Activated CD4-positive, alpha-beta memory T cell treated with anti-CD3 and anti-CD28 coated beads, Interleukin-2, amount 10 ng/mL, durations not matched to agents 7 days and 5 days (primary cell): ENCODE measurements at regions of chr5 and their contacts with region 1.

Region 1: DNA sequence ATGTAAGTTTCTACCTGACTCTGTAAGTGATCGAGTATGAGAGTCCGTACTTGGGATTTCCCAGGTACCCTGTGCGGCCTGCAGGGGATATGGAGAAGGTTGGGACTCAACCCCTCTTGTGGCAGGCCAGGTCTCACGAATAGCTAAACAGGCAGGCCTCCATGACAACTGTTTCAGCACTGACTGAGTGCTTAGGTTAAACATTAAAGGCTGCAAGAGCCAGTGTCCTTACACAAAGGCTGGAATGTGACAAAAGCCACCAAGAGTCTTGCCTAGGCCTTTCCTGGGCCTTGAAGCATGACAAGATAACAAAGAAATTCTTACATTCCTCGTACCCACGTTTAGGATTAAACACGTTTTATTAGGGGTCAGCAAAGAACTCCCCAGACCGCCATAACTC is 58.6 kb downstream of the THBS4 start:
- DNase-seq: no peak
- H3K4me3 Mint-ChIP-seq: no peak overlapping the region
- H3K27ac Mint-ChIP-seq: no peak overlapping the region
- H3K4me1 Mint-ChIP-seq: peaks cover 15% of the 10 kb centered on the region
- H3K27me3 Mint-ChIP-seq: no peaks in the 10 kb centered on the region

Region 2: DNA sequence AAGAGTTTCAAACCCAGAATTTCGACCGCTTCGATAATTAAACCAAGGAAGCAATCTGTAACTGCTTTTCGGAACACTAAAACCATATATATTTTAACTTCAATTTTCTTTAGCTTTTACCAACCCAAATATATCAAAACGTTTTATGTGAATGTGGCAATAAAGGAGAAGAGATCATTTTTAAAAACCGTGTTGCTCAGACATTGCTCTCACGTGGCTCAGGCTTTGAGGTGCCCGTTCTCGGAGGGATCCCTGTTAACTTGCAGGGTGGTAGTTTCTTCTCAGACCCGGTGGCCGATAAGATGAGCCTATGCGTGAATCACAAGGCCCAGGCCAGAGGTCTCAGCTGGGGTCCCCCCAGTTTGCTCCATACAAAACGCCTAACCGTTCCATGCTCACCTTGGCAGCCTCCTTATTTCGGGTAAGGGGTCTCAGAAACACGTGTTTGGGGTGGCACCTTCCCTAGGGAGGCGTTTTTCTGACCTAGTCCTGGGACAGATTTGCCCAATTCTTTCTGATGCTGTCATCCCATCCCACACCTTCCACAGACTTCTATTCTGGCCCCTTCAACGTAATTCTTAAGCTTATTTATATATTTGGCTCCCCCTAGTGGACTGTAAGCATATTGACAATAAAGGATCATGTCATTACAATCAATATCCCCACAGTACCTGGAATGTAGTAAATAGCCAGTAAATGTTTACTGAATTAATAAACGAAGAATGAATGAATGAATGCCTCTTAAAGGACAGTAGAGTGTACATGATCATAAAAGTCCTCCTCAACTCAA is 10.5 kb before region 1 on chr5:
- CTCF ChIA-PET with region 1: interaction called, 17 read pairs
- POLR2A ChIA-PET with region 1: no interaction called
- DNase-seq: peak; percentile 31
- H3K4me3 Mint-ChIP-seq: peak overlapping the region; percentile 56
- H3K27ac Mint-ChIP-seq: peak overlapping the region; percentile 64
- H3K4me1 Mint-ChIP-seq: peaks cover 16% of the 10 kb centered on the region
- H3K27me3 Mint-ChIP-seq: no peaks in the 10 kb centered on the region

Region 3: GRCh38 chr5:80134879-80135278 is 41.1 kb after region 1 on chr5:
- CTCF ChIA-PET with region 1: interaction called, 12 read pairs
- POLR2A ChIA-PET with region 1: interaction called, 10 read pairs
- DNase-seq: no peak
- H3K4me3 Mint-ChIP-seq: no peak overlapping the region
- H3K27ac Mint-ChIP-seq: peak overlapping the region; percentile 95
- H3K4me1 Mint-ChIP-seq: peaks cover 62% of the 10 kb centered on the region
- H3K27me3 Mint-ChIP-seq: no peaks in the 10 kb centered on the region

Region 4: DNA sequence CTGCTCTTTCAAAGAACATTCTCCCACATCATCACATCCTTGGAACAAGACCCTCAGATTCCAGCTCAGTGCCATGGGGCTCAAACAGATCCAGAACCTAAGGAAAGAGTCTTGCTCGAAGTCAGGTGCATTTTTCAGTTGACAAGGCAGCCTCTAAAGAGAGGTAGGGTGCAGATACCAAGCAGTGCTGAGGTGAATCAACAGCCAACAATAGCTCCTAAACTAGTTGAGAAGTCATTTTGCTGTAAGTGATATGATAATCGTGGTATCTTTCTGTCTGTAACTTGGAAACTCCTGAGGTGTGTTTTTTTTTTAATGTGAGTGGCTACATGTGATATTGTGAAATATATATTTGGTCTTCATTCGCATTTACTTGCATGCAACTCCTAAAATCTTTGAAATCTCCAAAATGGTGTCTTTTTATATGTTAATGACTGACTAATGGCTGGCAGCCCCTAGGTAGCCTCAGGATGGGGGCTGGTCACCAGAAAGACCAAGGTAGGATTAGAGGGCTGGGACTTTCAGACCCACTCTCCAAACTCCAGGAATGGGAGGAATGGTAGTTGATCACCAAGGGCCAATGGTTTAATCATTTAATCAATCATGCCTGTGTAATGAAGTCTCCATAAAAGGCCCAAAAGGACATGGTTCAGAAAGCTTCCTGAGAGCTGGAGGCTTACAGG is 65.5 kb after region 1 on chr5:
- CTCF ChIA-PET with region 1: interaction called, 13 read pairs
- POLR2A ChIA-PET with region 1: no interaction called
- DNase-seq: no peak
- H3K4me3 Mint-ChIP-seq: no peak overlapping the region
- H3K27ac Mint-ChIP-seq: no peak overlapping the region
- H3K4me1 Mint-ChIP-seq: peaks cover 7% of the 10 kb centered on the region
- H3K27me3 Mint-ChIP-seq: no peaks in the 10 kb centered on the region

Region 5: DNA sequence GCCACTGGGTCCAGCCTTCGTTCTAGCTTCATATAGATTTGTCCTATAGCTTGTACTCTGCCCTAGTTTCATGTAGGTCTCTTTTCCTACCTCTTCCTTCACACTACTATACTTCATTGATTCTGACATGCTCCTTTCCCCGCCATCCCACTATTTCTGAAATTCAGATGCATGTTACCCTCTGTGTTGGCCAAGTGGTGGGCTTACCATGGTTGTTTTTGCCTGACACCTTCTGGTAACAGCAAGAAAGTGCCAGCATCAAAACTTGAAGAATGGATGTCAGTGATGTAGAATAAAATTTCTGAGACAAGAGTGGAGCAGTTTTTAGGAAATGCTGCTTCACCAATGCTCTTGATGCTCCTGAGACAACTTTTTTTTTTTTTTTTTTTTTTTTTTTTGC is 181.6 kb after region 1 on chr5:
- CTCF ChIA-PET with region 1: interaction called, 38 read pairs
- POLR2A ChIA-PET with region 1: interaction called, 3 read pairs
- DNase-seq: no peak
- H3K4me3 Mint-ChIP-seq: no peak overlapping the region
- H3K27ac Mint-ChIP-seq: no peak overlapping the region
- H3K4me1 Mint-ChIP-seq: peaks cover 18% of the 10 kb centered on the region
- H3K27me3 Mint-ChIP-seq: no peaks in the 10 kb centered on the region